ENCODE measurements at regions of chr1 and their contacts with region 1.

Region 1: DNA sequence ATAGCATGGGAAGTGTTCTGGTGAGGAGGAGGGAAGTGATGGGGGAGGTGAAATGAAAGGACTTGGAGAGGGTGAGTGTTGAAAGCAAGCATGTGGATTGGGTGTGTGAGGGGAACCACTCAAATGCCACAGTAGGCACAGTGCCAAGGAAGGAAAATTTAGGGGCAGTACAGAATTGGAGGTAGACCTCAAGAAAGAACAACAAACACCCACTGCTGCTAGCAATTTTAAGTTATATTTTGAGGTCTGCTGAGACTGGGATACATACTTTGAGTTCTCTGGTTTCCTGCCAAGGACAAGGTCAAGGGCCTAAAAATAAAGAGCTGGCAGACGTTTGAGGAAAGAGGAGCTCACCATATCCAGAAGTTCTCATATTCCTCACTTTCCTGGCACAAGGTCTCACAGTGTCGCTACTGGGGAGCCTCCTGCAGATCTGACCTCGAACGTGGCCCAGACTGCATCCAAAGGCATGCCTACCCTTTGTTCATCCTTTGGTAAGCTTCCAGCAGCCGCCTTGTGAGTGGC is 104.0 kb downstream of the BRINP2 start:
- DNase-seq: peak in 2 of 4 donors; percentile 61 to 72
- ATAC-seq: peak; percentile 79
- H3K4me3 ChIP-seq: no peak overlapping the region
- H3K27ac ChIP-seq: no peak overlapping the region
- H3K4me1 ChIP-seq: peaks cover 0 to 5% of the 10 kb centered on the region in 2 donors
- H3K27me3 ChIP-seq: no peaks in the 10 kb centered on the region
- CTCF ChIP-seq: no peak

Region 2: GRCh38 chr1:177355595-177355994 is 80.8 kb after region 1 on chr1:
- intact Hi-C with region 1: loop called in 1 of 2 experiments (anchors 10 kb)
- DNase-seq: peak in 2 of 4 donors; percentile 16 to 37
- ATAC-seq: peak; percentile 43
- H3K4me3 ChIP-seq: no peak overlapping the region
- H3K27ac ChIP-seq: no peak overlapping the region
- H3K4me1 ChIP-seq: no peaks in the 10 kb centered on the region
- H3K27me3 ChIP-seq: no peaks in the 10 kb centered on the region
- CTCF ChIP-seq: peak in 1 of 2 donors; percentile 27

Region 3: GRCh38 chr1:177471244-177471643 is 196.5 kb after region 1 on chr1:
- intact Hi-C with region 1: no loop called
- DNase-seq: no peak
- ATAC-seq: no peak
- H3K4me3 ChIP-seq: no peak overlapping the region
- H3K27ac ChIP-seq: no peak overlapping the region
- H3K4me1 ChIP-seq: no peaks in the 10 kb centered on the region
- H3K27me3 ChIP-seq: no peaks in the 10 kb centered on the region
- CTCF ChIP-seq: no peak

Measured in left lung (tissue), 14 donors.